ENCODE measurements at regions of chr1 and their contacts with region 1.

Region 1: GRCh38 chr1:233121947-233122559 is 171.6 kb downstream of the NTPCR start:
- DNase-seq: no peak
- H3K4me3 ChIP-seq: no peak overlapping the region
- H3K27ac ChIP-seq: no peak overlapping the region
- H3K4me1 ChIP-seq: no peaks in the 10 kb centered on the region
- H3K27me3 ChIP-seq: no peaks in the 10 kb centered on the region
- CTCF ChIP-seq: no peak
- POLR2A ChIP-seq: no peak

Region 2: GRCh38 chr1:233097959-233098580 is 24.0 kb before region 1 on chr1:
- intact Hi-C with region 1: loop called (anchors 2 kb)
- DNase-seq: no peak
- H3K4me3 ChIP-seq: no peak overlapping the region
- H3K27ac ChIP-seq: no peak overlapping the region
- H3K4me1 ChIP-seq: no peaks in the 10 kb centered on the region
- H3K27me3 ChIP-seq: no peaks in the 10 kb centered on the region
- CTCF ChIP-seq: no peak
- POLR2A ChIP-seq: no peak